Breast epithelium (tissue), 4 donors: ENCODE measurements at regions of chr12 and their contacts with region 1.

Region 1: DNA sequence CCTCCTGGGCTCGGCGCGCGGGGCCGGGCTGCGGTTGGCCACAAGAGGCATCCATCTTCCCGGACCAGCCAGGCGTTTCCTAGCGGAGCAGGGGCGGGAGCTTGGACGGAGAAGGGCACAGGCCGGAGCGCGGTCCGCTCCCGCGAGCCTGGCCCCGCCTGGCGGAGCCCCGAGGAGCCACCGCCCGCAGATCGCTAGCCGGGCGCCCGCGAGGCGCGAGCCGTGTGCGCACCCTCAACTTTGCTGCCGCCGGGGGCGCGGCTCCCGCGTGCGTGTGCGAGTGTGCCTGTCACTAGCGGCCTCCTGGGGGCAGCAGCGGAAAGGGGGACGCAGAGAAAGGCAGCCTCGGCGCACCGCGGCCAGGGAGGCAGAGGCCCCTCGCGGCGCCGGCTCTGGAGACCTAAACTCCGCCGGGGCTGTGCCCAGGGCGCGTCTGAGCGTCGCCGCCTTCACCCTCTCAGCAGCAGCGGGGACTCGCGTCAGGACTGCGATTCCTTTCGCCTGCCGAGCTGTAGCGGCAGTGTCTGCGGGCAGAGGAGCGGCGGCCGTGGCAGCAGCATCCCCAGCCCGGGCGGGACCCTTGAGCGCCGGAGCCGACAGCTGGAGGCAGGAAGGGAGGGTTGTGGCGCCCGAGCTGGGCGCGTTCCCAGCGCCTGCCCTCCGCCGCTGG is 644 bp upstream of the SRGAP1 start:
- DNase-seq: peak; percentile 80 to 86
- H3K4me3 ChIP-seq: peak overlapping the region; percentile 93 to 99 (median 98)
- H3K27ac ChIP-seq: peak overlapping the region; percentile 93 to 97
- H3K4me1 ChIP-seq: peaks cover 0 to 15% of the 10 kb centered on the region in 2 donors
- H3K27me3 ChIP-seq: no peaks in the 10 kb centered on the region
- CTCF ChIP-seq: peak; percentile 66 to 99 (median 82)
- POLR2A ChIP-seq: no peak

Region 2: DNA sequence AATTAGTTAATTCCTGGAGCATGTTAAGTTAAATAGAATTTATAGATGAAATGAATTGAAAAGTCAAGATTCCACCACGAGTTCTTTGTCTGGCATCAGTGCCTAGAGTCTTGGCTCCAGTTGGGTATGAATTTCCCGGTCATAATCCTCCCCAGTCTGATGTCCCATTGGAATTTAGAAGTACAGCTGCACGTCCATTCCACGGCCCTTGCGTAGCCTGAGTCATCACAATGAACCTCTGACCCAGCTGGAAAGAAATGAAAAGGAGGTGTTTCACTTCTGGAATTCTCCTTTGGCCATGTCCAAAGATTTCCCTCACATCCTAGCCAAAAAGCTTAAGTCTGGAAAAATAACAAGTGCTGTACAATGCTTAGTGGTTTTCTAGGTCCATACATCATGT is 255.5 kb after region 1 on chr12:
- intact Hi-C with region 1: loop called (anchors 10 kb)
- DNase-seq: peak in 1 of 2 donors; percentile 55
- H3K4me3 ChIP-seq: no peak overlapping the region
- H3K27ac ChIP-seq: peak overlapping the region; percentile 72 to 74
- H3K4me1 ChIP-seq: peaks cover 7 to 14% of the 10 kb centered on the region in 2 donors
- H3K27me3 ChIP-seq: no peaks in the 10 kb centered on the region
- CTCF ChIP-seq: no peak
- POLR2A ChIP-seq: no peak

Region 3: GRCh38 chr12:64256166-64256800 is 412.4 kb after region 1 on chr12:
- intact Hi-C with region 1: loop called (anchors 5 kb)
- DNase-seq: no peak
- H3K4me3 ChIP-seq: no peak overlapping the region
- H3K27ac ChIP-seq: no peak overlapping the region
- H3K4me1 ChIP-seq: no peaks in the 10 kb centered on the region
- H3K27me3 ChIP-seq: no peaks in the 10 kb centered on the region
- CTCF ChIP-seq: peak; percentile 55 to 86 (median 78)
- POLR2A ChIP-seq: no peak